OCI-LY7 (cell line): ENCODE measurements at regions of chr12 and their contacts with region 1.

Region 1: GRCh38 chr12:49130151-49131050 is 794 bp downstream of the TUBA1B start:
- DNase-seq: peak; percentile 97
- H3K4me3 ChIP-seq: peak overlapping the region; percentile 90
- H3K27ac ChIP-seq: peak overlapping the region; percentile 95
- H3K4me1 ChIP-seq: peaks cover 22% of the 10 kb centered on the region
- CTCF ChIP-seq: peak; percentile 92

Region 2: DNA sequence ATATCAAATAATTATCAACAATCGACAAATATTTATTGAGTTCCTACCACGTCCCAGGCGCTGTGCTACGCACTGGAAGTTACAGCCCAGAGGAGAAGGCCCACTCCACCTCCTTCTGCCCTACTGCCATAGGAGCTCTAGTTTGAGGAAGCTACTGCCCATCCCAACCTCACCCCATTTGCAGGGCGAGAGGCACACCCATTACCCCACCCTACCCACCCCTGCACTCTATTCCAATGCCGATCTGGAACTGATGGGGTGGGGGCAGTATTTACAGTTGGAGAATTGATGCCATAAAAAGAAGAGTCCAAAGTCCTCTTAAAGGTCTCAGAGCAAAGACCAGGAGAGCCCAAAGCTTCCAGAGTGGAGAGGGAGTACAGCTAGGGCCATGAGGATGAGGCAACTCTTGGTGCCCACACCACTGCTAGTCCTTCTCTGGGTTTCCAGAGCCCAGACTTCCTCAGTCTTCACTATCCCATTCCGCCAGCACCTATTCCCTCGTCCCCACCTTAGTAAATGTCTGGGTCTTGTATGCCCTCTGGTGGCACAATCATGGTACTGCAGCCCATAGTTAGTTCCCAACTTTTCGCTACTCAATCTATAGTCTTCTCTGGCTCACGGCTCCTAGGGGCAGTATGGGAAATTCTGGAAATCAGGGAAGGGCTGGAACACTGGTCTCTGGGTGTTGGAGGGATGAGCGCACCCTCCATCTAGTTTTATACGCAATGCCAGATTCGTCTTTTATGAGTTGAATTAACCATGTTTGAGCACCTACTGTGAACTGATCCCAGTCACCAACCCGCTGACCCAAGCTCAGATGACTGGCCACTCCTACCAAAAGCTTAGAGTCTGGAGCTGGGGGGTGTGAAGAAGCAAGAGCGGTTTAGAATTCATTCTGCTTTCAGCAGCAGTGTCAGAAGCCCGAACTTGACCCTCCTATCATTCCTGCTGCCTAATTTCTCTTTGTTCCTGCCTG is 334.6 kb before region 1 on chr12:
- CTCF ChIA-PET with region 1: no interaction called
- POLR2A ChIA-PET with region 1: no interaction called
- intact Hi-C with region 1: no loop called
- DNase-seq: peak; percentile 55
- H3K4me3 ChIP-seq: no peak overlapping the region
- H3K27ac ChIP-seq: no peak overlapping the region
- H3K4me1 ChIP-seq: no peaks in the 10 kb centered on the region
- CTCF ChIP-seq: peak; percentile 95

Region 3: DNA sequence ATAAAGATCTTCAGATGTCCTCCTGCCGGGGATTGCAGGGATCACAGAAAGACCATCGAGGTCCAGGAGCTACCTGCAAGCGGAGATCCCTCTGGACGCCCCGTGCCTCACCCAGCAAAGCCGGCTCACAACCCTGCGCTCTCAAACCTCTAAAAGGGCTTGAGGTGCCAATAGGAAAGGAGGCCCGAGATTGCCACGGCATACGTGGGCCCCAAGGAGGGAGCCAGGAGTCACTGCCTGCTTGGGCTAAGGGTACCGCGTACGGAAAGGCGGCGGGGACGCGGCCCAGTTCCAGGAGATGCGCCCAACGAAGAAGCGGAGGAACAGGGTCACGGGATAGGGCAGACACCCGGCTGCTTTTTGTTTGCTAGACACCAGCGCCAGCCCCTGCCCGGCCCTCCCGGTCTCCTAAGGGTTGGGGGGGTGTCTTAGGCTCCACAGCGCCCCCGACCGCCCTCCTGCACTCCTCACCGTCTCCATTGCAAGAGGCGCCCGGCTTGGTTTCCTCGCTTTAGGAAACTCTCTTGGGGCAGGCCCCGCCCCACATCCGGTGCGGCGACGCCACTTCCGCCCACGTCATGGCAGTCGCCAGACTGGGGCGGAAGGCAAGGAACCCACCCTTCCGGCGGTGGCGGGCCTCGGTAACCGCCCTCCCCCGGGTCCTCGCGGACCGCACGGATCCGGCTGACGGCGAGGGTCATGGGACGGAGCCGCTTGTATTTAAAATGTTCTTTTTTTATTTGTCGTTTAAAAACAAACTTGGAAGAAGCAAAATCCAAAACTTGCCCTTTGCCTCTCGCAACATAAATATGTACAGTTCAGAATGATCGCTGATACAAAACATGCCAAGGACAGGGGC is 111.9 kb before region 1 on chr12 and contains the start of gene PRKAG1:
- CTCF ChIA-PET with region 1: interaction called, 14 read pairs
- POLR2A ChIA-PET with region 1: interaction called, 3 read pairs
- intact Hi-C with region 1: loop called (anchors 5 kb)
- DNase-seq: peak; percentile 98
- H3K4me3 ChIP-seq: peak within 1 kb of the TSS; percentile 88
- H3K27ac ChIP-seq: peak within 1 kb of the TSS; percentile 90
- H3K4me1 ChIP-seq: peaks cover 24% of the 10 kb centered on the region
- CTCF ChIP-seq: peak; percentile 72
- total RNA-seq, gene PRKAG1: 22.8 and 23.6 TPM in 2 replicates

Region 4: GRCh38 chr12:49110464-49111155 is 19.8 kb before region 1 on chr12 and contains the start of gene LMBR1L:
- CTCF ChIA-PET with region 1: interaction called, 5 read pairs
- POLR2A ChIA-PET with region 1: interaction called, 6 read pairs
- intact Hi-C with region 1: loop called (anchors 1 kb)
- DNase-seq: peak; percentile 99
- H3K4me3 ChIP-seq: peak within 1 kb of the TSS; percentile 81
- H3K27ac ChIP-seq: peak within 1 kb of the TSS; percentile 51
- H3K4me1 ChIP-seq: peaks cover 28% of the 10 kb centered on the region
- CTCF ChIP-seq: peak; percentile 65
- total RNA-seq, gene LMBR1L: 26.8 and 37.2 TPM in 2 replicates

Region 5: GRCh38 chr12:49188914-49189367 is 58.5 kb after region 1 on chr12 and contains the start of gene TUBA1A:
- CTCF ChIA-PET with region 1: interaction called, 14 read pairs
- POLR2A ChIA-PET with region 1: interaction called, 24 read pairs
- intact Hi-C with region 1: loop called (anchors 1 kb)
- DNase-seq: peak; percentile 99
- H3K4me3 ChIP-seq: peak within 1 kb of the TSS; percentile 84
- H3K27ac ChIP-seq: peak within 1 kb of the TSS; percentile 88
- H3K4me1 ChIP-seq: peaks cover 19% of the 10 kb centered on the region
- CTCF ChIP-seq: no peak
- total RNA-seq, gene TUBA1A: 189 and 214 TPM in 2 replicates

Region 6: DNA sequence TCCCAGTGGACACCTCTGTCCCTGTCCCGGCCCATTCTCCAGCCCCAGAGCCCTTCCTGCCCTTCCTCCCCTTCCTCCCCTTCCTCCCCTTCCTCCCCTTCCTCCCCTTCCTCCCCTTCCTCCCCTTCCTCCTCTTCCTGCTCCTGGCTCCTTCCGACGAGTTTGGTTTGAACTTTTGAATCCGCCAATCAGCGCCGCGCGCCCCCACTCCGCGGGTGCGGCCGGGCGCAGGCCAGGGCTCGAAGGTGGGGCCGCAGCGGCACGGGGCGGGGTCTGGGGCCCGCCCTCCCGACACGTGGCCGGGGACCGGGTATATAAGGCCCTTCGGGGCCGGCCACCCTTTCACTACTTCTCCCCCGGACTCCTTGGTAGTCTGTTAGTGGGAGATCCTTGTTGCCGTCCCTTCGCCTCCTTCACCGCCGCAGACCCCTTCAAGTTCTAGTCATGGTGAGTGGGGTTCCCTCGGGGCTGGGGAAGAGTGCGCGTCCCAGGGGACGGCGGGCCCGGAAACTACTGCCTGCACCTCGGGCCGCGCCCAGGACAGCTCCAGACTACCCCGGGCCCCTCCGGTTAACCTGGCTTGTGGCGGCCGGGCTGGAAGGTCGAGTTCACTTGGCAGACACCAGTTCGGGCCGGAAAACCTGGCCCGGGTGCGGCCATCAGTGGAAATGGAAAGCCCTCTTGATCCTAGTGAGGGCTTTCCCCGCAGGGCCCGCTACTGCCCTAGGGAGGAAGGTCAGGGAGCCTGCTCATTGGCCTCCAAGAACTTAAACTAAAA is 134.5 kb after region 1 on chr12 and contains the start of gene TUBA1C:
- CTCF ChIA-PET with region 1: interaction called, 3 read pairs
- POLR2A ChIA-PET with region 1: interaction called, 23 read pairs
- intact Hi-C with region 1: loop called (anchors 2 kb)
- DNase-seq: peak; percentile 95
- H3K4me3 ChIP-seq: peak within 1 kb of the TSS; percentile 85
- H3K27ac ChIP-seq: peak within 1 kb of the TSS; percentile 84
- H3K4me1 ChIP-seq: peaks cover 35% of the 10 kb centered on the region
- CTCF ChIP-seq: no peak
- total RNA-seq, gene TUBA1C: 256 and 291 TPM in 2 replicates